Heart left ventricle (tissue), 16 donors: ENCODE measurements at regions of chr9 and their contacts with region 1.

Region 1: GRCh38 chr9:4904322-4905134 is 80.5 kb upstream of the JAK2 start:
- DNase-seq: no peak
- ATAC-seq: peak in 1 of 4 donors; percentile 71
- H3K4me3 ChIP-seq: no peak overlapping the region
- H3K27ac ChIP-seq: peak overlapping the region in 1 of 12 donors; percentile 64
- H3K4me1 ChIP-seq: peaks cover 0 to 17% (median 0%) of the 10 kb centered on the region in 12 donors
- H3K27me3 ChIP-seq: no peaks in the 10 kb centered on the region
- CTCF ChIP-seq: no peak
- POLR2A ChIP-seq: no peak

Region 2: DNA sequence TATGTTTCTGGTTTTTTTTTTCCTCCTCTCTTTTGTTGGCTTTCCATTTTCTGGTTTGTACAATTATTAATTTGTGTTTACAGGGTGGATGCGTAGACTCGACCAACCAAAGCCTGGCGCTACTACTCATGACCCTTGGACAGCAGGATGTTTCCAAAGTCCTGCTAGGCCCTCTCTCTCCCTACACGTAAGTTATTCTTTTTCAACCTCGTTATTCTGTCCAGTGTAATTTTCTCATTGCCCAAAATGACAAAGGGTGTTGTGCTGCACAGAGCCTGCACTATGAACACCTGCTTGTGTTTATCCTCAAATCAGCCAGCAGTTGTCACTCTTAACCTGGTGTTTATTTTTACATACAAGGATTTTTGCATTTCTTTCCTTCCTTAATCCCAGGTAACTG is 55.2 kb before region 1 on chr9:
- intact Hi-C with region 1: loop called in 1 of 10 experiments (anchors 10 kb)
- DNase-seq: no peak
- ATAC-seq: no peak
- H3K4me3 ChIP-seq: no peak overlapping the region
- H3K27ac ChIP-seq: no peak overlapping the region
- H3K4me1 ChIP-seq: no peaks in the 10 kb centered on the region
- H3K27me3 ChIP-seq: no peaks in the 10 kb centered on the region
- CTCF ChIP-seq: peak in 4 of 12 donors; percentile 5 to 18 (median 10)
- POLR2A ChIP-seq: no peak